Naive thymus-derived CD4-positive, alpha-beta T cell (primary cell): ENCODE measurements at regions of chr3 and their contacts with region 1.

Region 1: GRCh38 chr3:69200384-69201068 is 78.1 kb upstream of the LMOD3 start:
- DNase-seq: peak in 2 of 9 donors; percentile 6 to 51
- ATAC-seq: no peak
- H3K4me3 ChIP-seq: peak overlapping the region; percentile 70
- H3K4me3 Mint-ChIP-seq: peak overlapping the region; percentile 70 to 91 (median 86)
- H3K27ac ChIP-seq: no peak overlapping the region
- H3K27ac Mint-ChIP-seq: peak overlapping the region; percentile 7 to 93 (median 86)
- H3K4me1 ChIP-seq: peaks cover 14 to 22% of the 10 kb centered on the region in 2 donors
- H3K4me1 Mint-ChIP-seq: peaks cover 13 to 71% (median 43%) of the 10 kb centered on the region in 7 donors
- H3K27me3 ChIP-seq: no peaks in the 10 kb centered on the region
- H3K27me3 Mint-ChIP-seq: no peaks in the 10 kb centered on the region

Region 2: DNA sequence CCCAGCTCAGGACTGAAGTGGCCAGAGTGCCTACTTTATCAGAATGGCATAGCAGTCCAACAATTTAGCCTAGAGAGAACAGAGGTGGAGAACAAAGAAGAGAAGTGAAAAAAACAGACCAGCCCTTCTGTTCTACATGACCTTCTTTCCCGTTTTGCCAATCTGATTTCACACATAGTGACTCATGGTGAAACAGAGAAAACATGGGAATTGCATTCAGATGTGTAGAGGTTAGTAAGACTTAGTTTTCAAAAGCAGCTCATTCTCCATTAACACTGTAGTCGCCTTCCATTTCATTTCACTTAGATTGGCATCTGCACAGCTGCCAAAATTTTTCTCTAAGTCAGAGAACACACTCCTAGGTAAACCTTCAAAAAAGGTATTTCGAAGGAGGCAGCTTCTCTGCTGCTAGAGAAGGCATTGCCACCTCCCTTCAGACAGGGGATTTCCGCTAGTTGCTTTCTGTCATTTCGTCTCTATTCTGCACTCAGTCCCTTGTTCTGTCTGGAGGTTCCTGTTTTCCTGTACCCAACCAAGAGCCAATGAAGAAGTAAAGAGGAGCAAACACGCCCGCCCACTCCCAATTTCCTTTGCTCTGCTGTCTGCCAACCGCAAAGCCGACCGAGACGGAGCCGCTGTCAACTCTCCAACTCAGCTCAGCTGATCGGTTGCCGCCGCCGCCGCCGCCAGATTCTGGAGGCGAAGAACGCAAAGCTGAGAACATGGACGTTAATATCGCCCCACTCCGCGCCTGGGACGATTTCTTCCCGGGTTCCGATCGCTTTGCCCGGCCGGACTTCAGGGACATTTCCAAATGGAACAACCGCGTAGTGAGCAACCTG is 116.0 kb before region 1 on chr3 and contains the start of gene ARL6IP5:
- CTCF ChIA-PET with region 1: no interaction called
- POLR2A ChIA-PET with region 1: interaction called, 3 read pairs
- intact Hi-C with region 1: loop called in 1 of 2 experiments (anchors 2 kb)
- DNase-seq: peak; percentile 71 to 95 (median 93)
- ATAC-seq: peak; percentile 84
- H3K4me3 ChIP-seq: peak within 1 kb of the TSS; percentile 89
- H3K4me3 Mint-ChIP-seq: peak within 1 kb of the TSS; percentile 88 to 99 (median 97)
- H3K27ac ChIP-seq: peak within 1 kb of the TSS; percentile 76
- H3K27ac Mint-ChIP-seq: peak within 1 kb of the TSS; percentile 92 to 99 (median 98)
- H3K4me1 ChIP-seq: peaks cover 58% of the 10 kb centered on the region in 2 donors
- H3K4me1 Mint-ChIP-seq: peaks cover 44 to 72% (median 62%) of the 10 kb centered on the region in 7 donors
- H3K27me3 ChIP-seq: no peaks in the 10 kb centered on the region
- H3K27me3 Mint-ChIP-seq: no peaks in the 10 kb centered on the region
- total RNA-seq, gene ARL6IP5: 75.8 to 226 (median 119) TPM

Region 3: DNA sequence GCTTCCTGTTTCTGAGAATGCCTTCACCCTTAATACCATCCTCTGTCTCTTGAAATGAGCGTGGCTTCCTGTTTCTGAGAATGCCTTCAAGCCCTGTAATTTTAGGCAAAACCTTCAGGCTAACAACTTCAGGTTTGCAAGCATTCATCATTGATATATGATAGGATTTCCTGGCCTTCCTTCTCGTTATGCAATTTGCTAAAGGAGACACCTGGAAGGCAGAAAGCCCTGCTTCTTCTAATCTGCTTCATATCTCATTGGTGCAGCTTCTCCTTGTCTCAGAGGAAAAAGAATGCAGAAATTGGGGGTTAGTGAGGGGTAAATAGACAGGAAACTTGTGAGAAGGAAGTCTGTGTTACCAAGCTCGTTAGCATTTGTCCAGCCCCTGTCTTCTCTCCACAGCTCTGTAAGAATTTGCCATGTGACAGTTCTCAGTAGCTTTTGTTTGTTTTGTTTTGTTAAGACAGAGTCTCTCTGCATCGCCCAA is 108.5 kb before region 1 on chr3:
- CTCF ChIA-PET with region 1: no interaction called
- POLR2A ChIA-PET with region 1: no interaction called
- intact Hi-C with region 1: loop called (anchors 2 to 5 kb)
- DNase-seq: peak in 7 of 9 donors; percentile 46 to 67 (median 60)
- ATAC-seq: peak; percentile 77
- H3K4me3 ChIP-seq: peak overlapping the region; percentile 40
- H3K4me3 Mint-ChIP-seq: peak overlapping the region; percentile 70 to 94 (median 79)
- H3K27ac ChIP-seq: peak overlapping the region; percentile 76
- H3K27ac Mint-ChIP-seq: peak overlapping the region; percentile 90 to 98 (median 93)
- H3K4me1 ChIP-seq: peaks cover 77 to 83% of the 10 kb centered on the region in 2 donors
- H3K4me1 Mint-ChIP-seq: peaks cover 62 to 93% (median 85%) of the 10 kb centered on the region in 7 donors
- H3K27me3 ChIP-seq: no peaks in the 10 kb centered on the region
- H3K27me3 Mint-ChIP-seq: no peaks in the 10 kb centered on the region

Region 4: GRCh38 chr3:69189487-69189886 is 11.0 kb before region 1 on chr3:
- CTCF ChIA-PET with region 1: no interaction called
- POLR2A ChIA-PET with region 1: no interaction called
- intact Hi-C with region 1: no loop called
- DNase-seq: no peak
- ATAC-seq: no peak
- H3K4me3 ChIP-seq: no peak overlapping the region
- H3K4me3 Mint-ChIP-seq: no peak overlapping the region
- H3K27ac ChIP-seq: no peak overlapping the region
- H3K27ac Mint-ChIP-seq: no peak overlapping the region
- H3K4me1 ChIP-seq: no peaks in the 10 kb centered on the region
- H3K4me1 Mint-ChIP-seq: peaks cover 0 to 19% (median 0%) of the 10 kb centered on the region in 7 donors
- H3K27me3 ChIP-seq: no peaks in the 10 kb centered on the region
- H3K27me3 Mint-ChIP-seq: no peaks in the 10 kb centered on the region

Region 5: DNA sequence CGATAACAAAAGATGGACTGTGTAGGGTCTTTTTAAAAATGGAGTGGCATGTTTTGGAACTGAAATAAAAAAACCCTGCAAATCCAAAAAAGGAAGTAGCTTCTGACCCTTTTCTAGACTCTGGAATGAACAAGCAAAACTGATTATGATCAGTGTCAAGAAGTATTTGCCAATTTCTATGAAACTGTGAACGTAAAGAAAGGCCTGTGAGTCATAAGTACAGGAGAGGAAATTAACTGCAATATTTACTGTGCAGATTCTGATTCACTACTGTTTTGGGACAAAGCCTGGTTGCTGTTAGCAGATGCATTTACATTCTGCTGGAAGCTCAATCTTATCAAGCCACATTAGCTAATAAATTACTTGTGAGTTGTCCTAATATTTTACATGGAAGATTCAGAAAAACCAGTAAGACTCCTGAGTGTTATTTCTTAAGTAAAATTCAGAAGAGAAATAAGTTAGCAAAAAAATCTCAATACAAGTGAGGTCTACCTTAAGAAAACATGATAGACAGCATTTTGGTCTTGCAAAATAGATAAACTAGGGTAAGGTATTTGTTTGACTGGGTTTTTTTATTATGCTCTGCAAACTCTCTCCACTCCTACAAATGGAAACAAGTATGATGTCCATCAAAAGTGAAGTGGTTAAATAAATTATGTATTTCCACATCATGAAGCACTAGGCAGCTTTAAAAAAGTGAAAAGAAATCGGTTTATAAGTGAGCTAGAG is 12.0 kb after region 1 on chr3:
- CTCF ChIA-PET with region 1: interaction called, 3 read pairs
- POLR2A ChIA-PET with region 1: interaction called, 3 read pairs
- intact Hi-C with region 1: loop called in 1 of 2 experiments (anchors 1 kb)
- DNase-seq: no peak
- ATAC-seq: peak; percentile 82
- H3K4me3 ChIP-seq: no peak overlapping the region
- H3K4me3 Mint-ChIP-seq: peak overlapping the region in 1 of 10 donors; percentile 67
- H3K27ac ChIP-seq: no peak overlapping the region
- H3K27ac Mint-ChIP-seq: peak overlapping the region in 3 of 9 donors; percentile 25 to 85 (median 29)
- H3K4me1 ChIP-seq: peaks cover 0 to 6% of the 10 kb centered on the region in 2 donors
- H3K4me1 Mint-ChIP-seq: peaks cover 0 to 50% (median 0%) of the 10 kb centered on the region in 7 donors
- H3K27me3 ChIP-seq: no peaks in the 10 kb centered on the region
- H3K27me3 Mint-ChIP-seq: no peaks in the 10 kb centered on the region

Region 6: DNA sequence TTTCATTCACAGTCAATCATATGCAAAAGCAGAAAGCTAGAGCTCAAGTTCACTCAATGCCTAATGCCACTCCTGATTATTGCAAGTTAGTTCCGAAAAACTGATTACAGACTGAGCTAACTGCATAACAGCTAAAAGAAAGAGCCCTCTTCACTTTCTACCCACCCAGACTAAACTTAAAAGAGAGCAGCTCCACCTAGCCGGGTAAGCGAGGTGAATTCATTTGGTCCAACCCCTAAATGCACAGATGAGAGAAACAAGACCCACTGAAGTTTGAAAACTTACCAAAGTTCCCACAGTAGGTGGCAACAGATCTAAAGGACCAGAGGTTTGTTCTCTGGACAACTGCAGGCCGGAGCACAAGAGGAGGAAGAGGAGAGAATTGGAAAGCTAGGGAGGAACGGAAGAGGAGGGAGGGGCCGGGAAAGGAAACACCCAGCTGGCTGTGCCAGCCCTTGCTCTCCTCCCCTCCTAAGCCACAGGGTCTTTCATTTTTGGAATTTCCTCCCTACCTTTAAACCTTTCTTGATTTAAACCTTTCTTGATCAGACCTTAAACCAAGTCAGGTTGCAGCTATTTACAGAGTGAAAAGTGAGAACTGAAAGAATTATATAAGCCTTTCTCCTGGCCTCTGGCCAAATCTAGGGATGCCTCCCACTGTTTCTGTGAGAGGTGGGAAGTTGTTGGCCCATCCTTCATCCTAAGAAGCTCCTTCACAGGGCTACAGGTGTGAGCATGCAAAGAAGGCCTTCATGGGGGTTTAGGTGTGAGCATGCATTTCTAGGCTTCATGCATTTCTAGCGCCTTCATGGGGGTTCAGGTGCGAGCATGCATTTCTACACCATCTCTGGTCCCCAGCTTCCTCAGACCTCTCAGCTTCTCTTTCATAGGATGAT is 36.5 kb after region 1 on chr3:
- CTCF ChIA-PET with region 1: no interaction called
- POLR2A ChIA-PET with region 1: no interaction called
- intact Hi-C with region 1: loop called (anchors 2 to 5 kb)
- DNase-seq: peak in 1 of 9 donors; percentile 5
- ATAC-seq: no peak
- H3K4me3 ChIP-seq: no peak overlapping the region
- H3K4me3 Mint-ChIP-seq: peak overlapping the region in 8 of 10 donors; percentile 58 to 78 (median 68)
- H3K27ac ChIP-seq: no peak overlapping the region
- H3K27ac Mint-ChIP-seq: peak overlapping the region in 8 of 9 donors; percentile 1 to 80 (median 42)
- H3K4me1 ChIP-seq: peaks cover 5 to 17% of the 10 kb centered on the region in 2 donors
- H3K4me1 Mint-ChIP-seq: peaks cover 9 to 33% (median 19%) of the 10 kb centered on the region in 7 donors
- H3K27me3 ChIP-seq: no peaks in the 10 kb centered on the region
- H3K27me3 Mint-ChIP-seq: no peaks in the 10 kb centered on the region

Region 7: GRCh38 chr3:69250014-69250413 is 49.5 kb after region 1 on chr3:
- CTCF ChIA-PET with region 1: no interaction called
- POLR2A ChIA-PET with region 1: interaction called, 3 read pairs
- intact Hi-C with region 1: loop called (anchors 2 kb)
- DNase-seq: peak in 7 of 9 donors; percentile 11 to 77 (median 39)
- ATAC-seq: peak; percentile 79
- H3K4me3 ChIP-seq: no peak overlapping the region
- H3K4me3 Mint-ChIP-seq: peak overlapping the region in 8 of 10 donors; percentile 40 to 91 (median 69)
- H3K27ac ChIP-seq: peak overlapping the region; percentile 17
- H3K27ac Mint-ChIP-seq: peak overlapping the region in 8 of 9 donors; percentile 2 to 90 (median 66)
- H3K4me1 ChIP-seq: no peaks in the 10 kb centered on the region
- H3K4me1 Mint-ChIP-seq: peaks cover 0 to 21% (median 13%) of the 10 kb centered on the region in 7 donors
- H3K27me3 ChIP-seq: no peaks in the 10 kb centered on the region
- H3K27me3 Mint-ChIP-seq: peaks cover 0 to 4% (median 0%) of the 10 kb centered on the region in 5 donors

Region 8: GRCh38 chr3:69385723-69386555 is 185.4 kb after region 1 on chr3 and contains the start of gene FRMD4B:
- CTCF ChIA-PET with region 1: no interaction called
- POLR2A ChIA-PET with region 1: no interaction called
- intact Hi-C with region 1: no loop called
- DNase-seq: peak in 3 of 9 donors; percentile 5 to 61 (median 20)
- ATAC-seq: peak; percentile 78
- H3K4me3 ChIP-seq: no peak within 1 kb of the TSS
- H3K4me3 Mint-ChIP-seq: peak within 1 kb of the TSS; percentile 29 to 81 (median 62)
- H3K27ac ChIP-seq: no peak within 1 kb of the TSS
- H3K27ac Mint-ChIP-seq: no peak within 1 kb of the TSS
- H3K4me1 ChIP-seq: no peaks in the 10 kb centered on the region
- H3K4me1 Mint-ChIP-seq: peaks cover 5 to 18% (median 10%) of the 10 kb centered on the region in 7 donors
- H3K27me3 ChIP-seq: peaks cover 0 to 4% of the 10 kb centered on the region in 2 donors
- H3K27me3 Mint-ChIP-seq: peaks cover 40 to 89% (median 47%) of the 10 kb centered on the region in 5 donors
- total RNA-seq, gene FRMD4B: 3.0 to 32.2 (median 6.5) TPM

Region 9: DNA sequence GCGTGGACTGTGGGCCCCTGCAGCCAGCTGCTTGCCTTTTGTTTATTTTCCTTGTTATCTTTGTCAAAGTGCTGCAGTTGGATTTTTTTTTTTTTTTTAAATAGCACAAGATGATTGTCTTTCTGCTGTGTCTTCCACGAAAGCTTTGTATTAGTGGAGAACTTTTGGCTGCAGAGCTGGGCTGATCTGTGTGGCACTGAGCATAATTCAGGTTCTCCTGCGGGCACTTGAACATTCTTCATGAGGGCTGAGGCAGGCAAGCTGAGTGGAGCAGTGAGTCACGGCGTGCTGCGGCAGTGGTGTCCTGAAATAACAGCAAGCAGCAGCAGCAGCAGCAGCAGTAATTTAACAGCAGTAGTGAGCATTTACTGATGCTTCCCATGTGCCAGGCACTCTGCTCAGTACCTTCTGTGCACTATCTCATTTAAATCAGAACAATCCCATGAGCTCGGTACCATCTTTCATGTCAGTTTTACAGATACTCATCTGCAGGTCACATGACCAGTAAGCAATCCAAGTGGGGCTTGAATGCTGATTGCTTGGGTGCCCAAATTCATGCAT is 584.5 kb after region 1 on chr3:
- CTCF ChIA-PET with region 1: no interaction called
- POLR2A ChIA-PET with region 1: no interaction called
- intact Hi-C with region 1: no loop called
- DNase-seq: no peak
- ATAC-seq: no peak
- H3K4me3 ChIP-seq: no peak overlapping the region
- H3K4me3 Mint-ChIP-seq: no peak overlapping the region
- H3K27ac ChIP-seq: no peak overlapping the region
- H3K27ac Mint-ChIP-seq: no peak overlapping the region
- H3K4me1 ChIP-seq: no peaks in the 10 kb centered on the region
- H3K4me1 Mint-ChIP-seq: no peaks in the 10 kb centered on the region
- H3K27me3 ChIP-seq: no peaks in the 10 kb centered on the region
- H3K27me3 Mint-ChIP-seq: peaks cover 0 to 7% (median 0%) of the 10 kb centered on the region in 5 donors